Left ventricle myocardium inferior (tissue), 1 donor: ENCODE measurements at regions of chr3 and their contacts with region 1.

Region 1: GRCh38 chr3:40580494-40581091 is 55.8 kb downstream of the ZNF621 start:
- DNase-seq: peak; percentile 42
- H3K4me3 ChIP-seq: no peak overlapping the region
- H3K27ac ChIP-seq: no peak overlapping the region
- H3K4me1 ChIP-seq: peaks cover 28% of the 10 kb centered on the region
- H3K27me3 ChIP-seq: no peaks in the 10 kb centered on the region
- CTCF ChIP-seq: peak; percentile 97

Region 2: DNA sequence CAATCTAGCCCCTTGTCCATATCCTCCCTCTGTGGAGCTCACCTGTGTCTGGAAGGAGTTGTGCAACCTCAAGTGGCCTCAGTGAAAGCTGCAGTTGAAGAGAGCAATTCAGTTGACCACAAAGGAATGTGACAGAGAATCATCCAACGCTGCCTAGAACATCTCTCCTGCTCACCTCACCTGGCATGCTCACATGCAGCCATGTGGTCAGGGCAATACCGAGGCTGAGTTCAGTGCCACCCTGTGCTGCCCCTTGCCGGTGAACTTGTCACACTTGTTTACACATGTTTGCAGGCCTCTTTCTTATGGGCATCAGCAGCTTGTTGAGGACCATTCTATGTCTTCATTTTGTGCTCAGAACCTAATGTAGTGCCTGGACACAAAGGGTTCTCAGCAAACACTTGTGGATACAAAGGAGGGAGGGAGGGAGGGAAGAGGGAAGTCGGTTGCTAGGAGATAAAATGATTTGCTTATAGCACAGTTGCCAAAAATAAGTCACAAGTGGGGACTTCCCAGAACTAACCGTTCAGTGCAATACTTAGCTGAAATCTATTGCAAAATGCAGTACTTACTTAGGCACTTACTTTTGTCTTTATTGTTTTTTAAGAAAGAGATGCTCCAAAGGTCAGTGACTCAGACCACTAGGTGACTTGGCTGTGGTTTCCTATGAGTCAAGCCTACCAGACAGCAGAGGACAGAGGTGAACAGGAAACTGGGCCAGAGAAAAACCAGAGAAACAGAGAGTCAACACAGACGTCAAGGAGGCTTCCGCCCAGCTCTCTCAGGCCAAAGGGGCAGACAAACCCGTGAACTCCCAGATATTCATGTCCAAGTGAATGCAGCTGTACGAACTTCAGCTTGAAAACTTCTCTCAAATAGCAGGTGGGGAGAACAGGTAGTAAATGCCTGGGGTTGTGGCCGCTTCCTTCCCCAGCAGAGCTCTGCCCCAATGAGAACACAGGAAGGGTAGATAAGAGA is 390.9 kb after region 1 on chr3:
- intact Hi-C with region 1: loop called (anchors 10 kb)
- DNase-seq: peak; percentile 49
- H3K4me3 ChIP-seq: no peak overlapping the region
- H3K27ac ChIP-seq: peak overlapping the region; percentile 81
- H3K4me1 ChIP-seq: peaks cover 64% of the 10 kb centered on the region
- H3K27me3 ChIP-seq: no peaks in the 10 kb centered on the region
- CTCF ChIP-seq: peak; percentile 10

Region 3: GRCh38 chr3:41199866-41200668 is 619.5 kb after region 1 on chr3:
- intact Hi-C with region 1: loop called (anchors 5 kb)
- DNase-seq: peak; percentile 37
- H3K4me3 ChIP-seq: peak overlapping the region; percentile 84
- H3K27ac ChIP-seq: peak overlapping the region; percentile 95
- H3K4me1 ChIP-seq: peaks cover 66% of the 10 kb centered on the region
- H3K27me3 ChIP-seq: no peaks in the 10 kb centered on the region
- CTCF ChIP-seq: no peak

Region 4: GRCh38 chr3:41210966-41211365 is 630.4 kb after region 1 on chr3:
- intact Hi-C with region 1: no loop called
- DNase-seq: no peak
- H3K4me3 ChIP-seq: no peak overlapping the region
- H3K27ac ChIP-seq: no peak overlapping the region
- H3K4me1 ChIP-seq: peaks cover 91% of the 10 kb centered on the region
- H3K27me3 ChIP-seq: no peaks in the 10 kb centered on the region
- CTCF ChIP-seq: no peak

Region 5: GRCh38 chr3:41882956-41883355 is 1302.4 kb after region 1 on chr3:
- intact Hi-C with region 1: loop called (anchors 2 kb)
- DNase-seq: no peak
- H3K4me3 ChIP-seq: no peak overlapping the region
- H3K27ac ChIP-seq: no peak overlapping the region
- H3K4me1 ChIP-seq: no peaks in the 10 kb centered on the region
- H3K27me3 ChIP-seq: no peaks in the 10 kb centered on the region
- CTCF ChIP-seq: no peak